ENCODE measurements at regions of chr3 and their contacts with region 1.

Region 1: GRCh38 chr3:37967260-37967881 is 23.2 kb upstream of the VILL start:
- DNase-seq: peak; percentile 79
- ATAC-seq: peak; percentile 86
- H3K4me3 Mint-ChIP-seq: no peak overlapping the region
- H3K27ac Mint-ChIP-seq: no peak overlapping the region
- H3K4me1 Mint-ChIP-seq: no peaks in the 10 kb centered on the region
- H3K27me3 Mint-ChIP-seq: no peaks in the 10 kb centered on the region

Region 2: DNA sequence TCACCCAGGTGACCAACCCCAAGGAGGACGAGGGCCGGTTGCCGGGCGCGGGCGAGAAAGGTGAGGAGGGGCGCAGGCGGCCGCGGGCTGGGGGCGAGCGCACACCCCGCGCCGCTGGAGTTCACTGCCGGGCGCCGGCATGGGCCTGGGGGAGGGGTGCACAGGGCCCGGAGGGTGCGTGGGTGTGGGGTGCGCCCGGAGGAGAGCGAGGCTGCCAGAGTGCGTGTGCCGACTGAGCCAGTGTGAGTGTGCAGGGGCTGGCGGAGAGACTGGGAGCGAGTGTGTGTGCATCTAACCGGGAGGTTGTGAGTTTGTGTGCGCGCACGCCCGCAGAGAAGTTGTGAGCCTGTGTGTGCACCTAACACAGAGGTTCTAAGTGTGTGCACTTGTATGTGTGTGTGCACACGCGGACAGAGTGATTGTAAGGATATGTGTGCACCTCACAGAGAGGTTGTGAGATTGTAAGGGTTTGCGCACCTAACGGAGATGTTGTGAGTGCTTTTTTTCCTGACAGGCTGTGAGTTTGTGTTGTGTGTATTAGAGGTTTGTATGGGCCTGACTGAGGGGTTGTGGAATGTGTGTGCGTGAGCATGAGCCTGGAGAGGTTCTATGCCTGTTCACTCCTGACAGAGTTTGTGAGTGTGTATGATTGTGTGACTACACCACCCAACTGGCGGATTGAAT is 105.0 kb before region 1 on chr3:
- CTCF ChIA-PET with region 1: interaction called, 11 read pairs
- POLR2A ChIA-PET with region 1: no interaction called
- intact Hi-C with region 1: no loop called
- DNase-seq: peak; percentile 80
- ATAC-seq: peak; percentile 42
- H3K4me3 Mint-ChIP-seq: peak overlapping the region; percentile 73
- H3K27ac Mint-ChIP-seq: peak overlapping the region; percentile 48
- H3K4me1 Mint-ChIP-seq: peaks cover 23% of the 10 kb centered on the region
- H3K27me3 Mint-ChIP-seq: peaks cover 5% of the 10 kb centered on the region

Region 3: GRCh38 chr3:37956723-37957528 is 10.4 kb before region 1 on chr3:
- CTCF ChIA-PET with region 1: interaction called, 27 read pairs
- POLR2A ChIA-PET with region 1: no interaction called
- intact Hi-C with region 1: no loop called
- DNase-seq: no peak
- ATAC-seq: peak; percentile 51
- H3K4me3 Mint-ChIP-seq: no peak overlapping the region
- H3K27ac Mint-ChIP-seq: peak overlapping the region; percentile 79
- H3K4me1 Mint-ChIP-seq: peaks cover 24% of the 10 kb centered on the region
- H3K27me3 Mint-ChIP-seq: no peaks in the 10 kb centered on the region

Region 4: GRCh38 chr3:37979541-37980461 is 12.4 kb after region 1 on chr3:
- CTCF ChIA-PET with region 1: interaction called, 16 read pairs
- POLR2A ChIA-PET with region 1: no interaction called
- intact Hi-C with region 1: no loop called
- DNase-seq: no peak
- ATAC-seq: no peak
- H3K4me3 Mint-ChIP-seq: no peak overlapping the region
- H3K27ac Mint-ChIP-seq: no peak overlapping the region
- H3K4me1 Mint-ChIP-seq: peaks cover under 1% of the 10 kb centered on the region
- H3K27me3 Mint-ChIP-seq: no peaks in the 10 kb centered on the region